Thyroid gland (tissue), 4 donors: ENCODE measurements at regions of chr6 and their contacts with region 1.

Region 1: GRCh38 chr6:139375232-139376016 is 976 bp upstream of the CITED2 start:
- DNase-seq: peak; percentile 93 to 96
- H3K4me3 ChIP-seq: peak overlapping the region; percentile 93 to 98 (median 97)
- H3K27ac ChIP-seq: peak overlapping the region; percentile 99 to 100 (median 100)
- H3K4me1 ChIP-seq: peaks cover 0 to 9% of the 10 kb centered on the region in 2 donors
- H3K27me3 ChIP-seq: no peaks in the 10 kb centered on the region
- CTCF ChIP-seq: peak in 2 of 6 experiments; percentile 10 to 24
- POLR2A ChIP-seq: peak; percentile 34 to 81

Region 2: GRCh38 chr6:139539852-139540251 is 164.4 kb after region 1 on chr6:
- intact Hi-C with region 1: loop called (anchors 10 kb)
- DNase-seq: no peak
- H3K4me3 ChIP-seq: no peak overlapping the region
- H3K27ac ChIP-seq: no peak overlapping the region
- H3K4me1 ChIP-seq: peaks cover 23 to 30% of the 10 kb centered on the region in 2 donors
- H3K27me3 ChIP-seq: no peaks in the 10 kb centered on the region
- CTCF ChIP-seq: no peak
- POLR2A ChIP-seq: no peak

Region 3: DNA sequence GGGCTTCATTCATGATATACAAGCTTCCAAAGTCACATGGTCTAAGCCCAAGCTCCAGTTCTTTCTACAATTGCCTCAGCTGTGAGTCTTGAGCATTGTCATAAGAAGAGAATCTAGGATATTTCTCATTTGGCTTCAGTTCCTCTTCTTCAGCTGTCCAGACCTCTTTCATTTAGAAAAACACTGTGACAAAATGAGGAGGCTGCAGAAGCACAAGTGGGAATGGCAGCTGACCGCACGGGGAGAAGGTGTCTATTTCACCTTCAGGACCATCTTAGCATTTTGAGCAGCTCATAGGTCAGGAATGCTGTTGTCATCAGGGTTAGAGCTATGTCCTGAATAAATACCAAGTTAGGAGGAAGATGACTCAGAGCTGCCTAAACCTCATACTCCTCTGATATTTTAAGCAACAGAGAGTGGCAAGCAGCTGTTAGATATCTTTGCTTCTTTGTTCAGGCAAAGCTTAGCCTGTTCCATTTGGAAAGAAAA is 389.1 kb after region 1 on chr6:
- intact Hi-C with region 1: loop called (anchors 10 kb)
- DNase-seq: no peak
- H3K4me3 ChIP-seq: no peak overlapping the region
- H3K27ac ChIP-seq: peak overlapping the region; percentile 25 to 85 (median 71)
- H3K4me1 ChIP-seq: peaks cover 41 to 50% of the 10 kb centered on the region in 2 donors
- H3K27me3 ChIP-seq: no peaks in the 10 kb centered on the region
- CTCF ChIP-seq: no peak
- POLR2A ChIP-seq: no peak

Region 4: GRCh38 chr6:139973669-139974344 is 598.4 kb after region 1 on chr6:
- intact Hi-C with region 1: loop called (anchors 10 kb)
- DNase-seq: no peak
- H3K4me3 ChIP-seq: no peak overlapping the region
- H3K27ac ChIP-seq: peak overlapping the region in 2 of 3 donors; percentile 32 to 57
- H3K4me1 ChIP-seq: peaks cover 38 to 41% of the 10 kb centered on the region in 2 donors
- H3K27me3 ChIP-seq: no peaks in the 10 kb centered on the region
- CTCF ChIP-seq: no peak
- POLR2A ChIP-seq: no peak